Activated CD4-positive, alpha-beta memory T cell treated with anti-CD3 and anti-CD28 coated beads, Interleukin-2, amount 10 ng/mL, durations not matched to agents 7 days and 5 days (primary cell): ENCODE measurements at regions of chr18 and their contacts with region 1.

Region 1: GRCh38 chr18:35143622-35144596 is 96.9 kb upstream of the ZNF397 start:
- DNase-seq: peak; percentile 24
- H3K4me3 Mint-ChIP-seq: no peak overlapping the region
- H3K27ac Mint-ChIP-seq: no peak overlapping the region
- H3K4me1 Mint-ChIP-seq: no peaks in the 10 kb centered on the region
- H3K27me3 Mint-ChIP-seq: no peaks in the 10 kb centered on the region

Region 2: GRCh38 chr18:34880882-34881834 is 262.8 kb before region 1 on chr18:
- CTCF ChIA-PET with region 1: no interaction called
- POLR2A ChIA-PET with region 1: no interaction called
- DNase-seq: no peak
- H3K4me3 Mint-ChIP-seq: no peak overlapping the region
- H3K27ac Mint-ChIP-seq: no peak overlapping the region
- H3K4me1 Mint-ChIP-seq: no peaks in the 10 kb centered on the region
- H3K27me3 Mint-ChIP-seq: peaks cover 2% of the 10 kb centered on the region

Region 3: DNA sequence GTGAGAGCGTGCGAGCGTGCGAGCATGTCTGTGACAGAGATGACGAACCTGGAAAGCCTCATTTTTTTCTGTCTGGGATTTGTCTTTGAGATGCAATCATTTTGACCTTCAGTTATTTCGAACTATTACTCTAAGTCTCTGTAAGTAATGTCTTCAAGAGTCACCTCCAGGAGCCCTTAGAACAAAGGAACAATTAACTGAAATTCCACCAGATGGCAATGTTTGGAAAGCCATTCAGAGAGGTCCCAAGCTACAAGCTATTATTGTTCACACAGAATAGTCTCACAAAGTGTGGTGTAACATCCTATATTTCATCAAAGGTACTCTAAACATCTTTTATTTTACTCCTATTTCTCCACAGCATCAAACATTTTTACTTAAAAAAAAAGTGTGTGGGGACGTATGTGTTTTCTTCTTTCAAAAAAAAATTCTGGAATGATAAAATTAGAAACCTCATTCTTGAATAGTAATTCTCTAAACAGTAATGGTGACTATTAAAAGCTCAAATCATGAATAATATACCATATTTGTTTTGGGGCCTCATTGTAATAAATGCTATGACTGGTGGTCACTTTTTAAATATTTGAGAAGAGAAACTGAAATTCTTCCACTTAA is 137.8 kb before region 1 on chr18:
- CTCF ChIA-PET with region 1: interaction called, 27 read pairs
- POLR2A ChIA-PET with region 1: no interaction called
- DNase-seq: no peak
- H3K4me3 Mint-ChIP-seq: no peak overlapping the region
- H3K27ac Mint-ChIP-seq: no peak overlapping the region
- H3K4me1 Mint-ChIP-seq: no peaks in the 10 kb centered on the region
- H3K27me3 Mint-ChIP-seq: no peaks in the 10 kb centered on the region

Region 4: DNA sequence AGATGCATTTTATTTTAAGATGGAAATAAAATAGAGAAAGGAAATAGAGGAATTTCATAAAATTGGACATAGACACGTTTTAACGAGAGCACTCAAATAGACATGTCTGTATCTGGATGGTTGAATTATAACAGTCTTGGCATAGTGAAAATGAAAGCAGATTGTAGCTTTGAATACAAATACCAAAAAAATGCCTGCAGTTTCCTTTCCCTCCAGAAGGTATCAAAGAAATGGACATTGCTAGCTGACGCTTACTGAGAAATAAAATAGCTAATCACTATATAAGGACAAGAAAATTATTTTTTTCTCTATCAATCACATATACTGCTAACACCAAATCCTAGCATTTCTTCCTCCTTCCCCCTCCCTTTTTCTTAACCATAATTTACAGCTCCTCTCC is 114.1 kb before region 1 on chr18:
- CTCF ChIA-PET with region 1: interaction called, 10 read pairs
- POLR2A ChIA-PET with region 1: interaction called, 3 read pairs
- DNase-seq: no peak
- H3K4me3 Mint-ChIP-seq: peak overlapping the region; percentile 67
- H3K27ac Mint-ChIP-seq: peak overlapping the region; percentile 89
- H3K4me1 Mint-ChIP-seq: peaks cover 27% of the 10 kb centered on the region
- H3K27me3 Mint-ChIP-seq: no peaks in the 10 kb centered on the region

Region 5: DNA sequence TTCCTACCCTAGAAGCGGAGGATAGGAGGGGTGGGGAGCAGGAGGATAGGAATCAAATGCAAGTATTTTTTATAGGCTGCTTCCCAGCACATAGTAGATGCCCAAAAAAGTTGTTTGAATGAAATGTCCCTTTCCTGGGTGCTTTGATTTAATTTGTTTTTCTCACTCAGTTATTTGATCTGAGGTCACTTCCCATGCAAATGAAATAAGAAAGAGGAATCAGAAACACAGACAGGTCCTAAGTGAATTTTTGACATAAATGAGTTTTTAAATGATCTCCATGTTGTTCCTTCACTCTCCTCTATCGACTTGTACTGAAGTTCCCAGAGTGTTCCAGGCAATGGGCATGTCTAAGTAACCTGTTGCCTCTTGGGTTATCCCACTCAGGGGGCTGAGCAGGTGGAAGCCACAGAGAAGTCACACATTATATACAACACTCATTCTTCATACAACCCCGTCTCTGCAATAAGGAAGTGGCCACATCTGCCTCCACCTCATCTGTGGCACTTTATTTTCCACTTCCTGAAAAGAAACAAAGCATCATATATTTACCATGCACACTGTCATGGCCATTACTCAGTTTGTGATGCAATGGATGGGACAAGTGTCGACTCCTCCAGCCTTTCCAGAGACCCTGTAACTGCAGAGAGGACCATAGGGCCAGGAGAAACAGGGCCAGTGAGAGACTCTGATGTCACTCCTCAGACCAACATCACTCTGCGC is 15.0 kb after region 1 on chr18:
- CTCF ChIA-PET with region 1: no interaction called
- POLR2A ChIA-PET with region 1: no interaction called
- DNase-seq: peak; percentile 37
- H3K4me3 Mint-ChIP-seq: no peak overlapping the region
- H3K27ac Mint-ChIP-seq: peak overlapping the region; percentile 66
- H3K4me1 Mint-ChIP-seq: peaks cover 23% of the 10 kb centered on the region
- H3K27me3 Mint-ChIP-seq: no peaks in the 10 kb centered on the region